Caco-2 (cell line): ENCODE measurements at regions of chr10 and their contacts with region 1.

Region 1: GRCh38 chr10:71623098-71623985 is 96.2 kb downstream of the C10orf105 start:
- DNase-seq: peak; percentile 58 to 76
- H3K4me3 ChIP-seq: no peak overlapping the region
- H3K4me3 Mint-ChIP-seq: no peak overlapping the region
- H3K27ac Mint-ChIP-seq: peak overlapping the region; percentile 70
- H3K4me1 ChIP-seq: peaks cover 33% of the 10 kb centered on the region
- H3K4me1 Mint-ChIP-seq: peaks cover 36% of the 10 kb centered on the region
- H3K27me3 ChIP-seq: no peaks in the 10 kb centered on the region
- H3K27me3 Mint-ChIP-seq: no peaks in the 10 kb centered on the region
- CTCF ChIP-seq: peak in 1 of 2 experiments; percentile 41

Region 2: DNA sequence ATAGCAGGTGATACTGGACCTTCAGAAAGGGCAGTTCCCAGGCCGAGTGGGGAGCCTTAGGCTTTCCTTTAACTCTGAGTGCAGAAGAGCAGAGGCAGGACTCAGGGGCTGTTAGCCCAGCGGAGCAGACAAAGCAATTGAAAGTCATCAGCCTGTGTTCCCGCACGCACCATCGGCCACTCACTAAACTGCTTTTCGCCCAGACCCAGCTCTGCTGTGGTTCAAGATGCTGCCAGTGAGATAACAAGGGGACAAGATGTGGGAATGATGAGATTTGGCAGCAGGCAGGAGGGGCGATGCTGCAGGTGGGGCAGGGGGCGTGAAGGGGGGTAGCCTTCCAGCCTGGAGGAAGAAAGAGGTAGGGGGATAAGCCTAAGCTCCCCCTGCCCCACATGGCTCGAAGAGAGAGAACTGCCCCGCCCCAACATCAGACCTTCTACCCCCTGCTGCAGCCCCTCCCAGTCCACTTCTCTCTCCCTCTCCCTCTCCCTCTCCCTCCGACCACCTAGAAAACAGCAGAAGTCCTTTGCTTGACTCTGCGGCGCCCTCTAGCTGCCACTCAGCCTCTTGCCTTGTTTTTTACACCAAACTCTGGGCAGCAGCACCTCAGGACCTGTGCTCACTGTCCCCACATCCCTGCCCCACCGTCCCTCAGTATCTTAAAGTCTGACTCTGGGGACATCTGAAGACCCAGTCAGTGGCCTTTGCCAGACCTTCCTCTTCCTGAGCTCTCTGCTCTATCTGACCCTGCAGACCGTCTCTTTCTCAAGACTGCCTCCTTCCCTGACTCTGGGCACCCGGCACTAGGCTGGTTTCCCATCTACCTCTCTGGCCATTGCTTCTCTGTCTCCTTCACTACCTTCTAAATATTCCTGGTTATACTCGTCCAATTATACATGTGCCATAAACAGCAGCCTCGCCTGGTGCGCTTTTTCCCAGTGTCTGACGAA is 14.2 kb before region 1 on chr10:
- CTCF ChIA-PET with region 1: interaction called, 19 read pairs
- POLR2A ChIA-PET with region 1: no interaction called
- intact Hi-C with region 1: no loop called
- DNase-seq: peak; percentile 83 to 86
- H3K4me3 ChIP-seq: no peak overlapping the region
- H3K4me3 Mint-ChIP-seq: no peak overlapping the region
- H3K27ac Mint-ChIP-seq: no peak overlapping the region
- H3K4me1 ChIP-seq: peaks cover 14% of the 10 kb centered on the region; the same call in 1 of the 2 replicates
- H3K4me1 Mint-ChIP-seq: no peaks in the 10 kb centered on the region
- H3K27me3 ChIP-seq: no peaks in the 10 kb centered on the region
- H3K27me3 Mint-ChIP-seq: no peaks in the 10 kb centered on the region
- CTCF ChIP-seq: peak; percentile 90 to 97

Region 3: GRCh38 chr10:71647526-71648253 is 24.3 kb after region 1 on chr10:
- CTCF ChIA-PET with region 1: interaction called, 3 read pairs
- POLR2A ChIA-PET with region 1: no interaction called
- intact Hi-C with region 1: loop called (anchors 1 kb)
- DNase-seq: peak in 1 of 2 experiments; percentile 70
- H3K4me3 ChIP-seq: no peak overlapping the region
- H3K4me3 Mint-ChIP-seq: no peak overlapping the region
- H3K27ac Mint-ChIP-seq: no peak overlapping the region
- H3K4me1 ChIP-seq: no peaks in the 10 kb centered on the region
- H3K4me1 Mint-ChIP-seq: peaks cover 6% of the 10 kb centered on the region
- H3K27me3 ChIP-seq: no peaks in the 10 kb centered on the region
- H3K27me3 Mint-ChIP-seq: no peaks in the 10 kb centered on the region
- CTCF ChIP-seq: peak; percentile 82 to 87